ENCODE measurements at regions of chr17 and their contacts with region 1.

Region 1: DNA sequence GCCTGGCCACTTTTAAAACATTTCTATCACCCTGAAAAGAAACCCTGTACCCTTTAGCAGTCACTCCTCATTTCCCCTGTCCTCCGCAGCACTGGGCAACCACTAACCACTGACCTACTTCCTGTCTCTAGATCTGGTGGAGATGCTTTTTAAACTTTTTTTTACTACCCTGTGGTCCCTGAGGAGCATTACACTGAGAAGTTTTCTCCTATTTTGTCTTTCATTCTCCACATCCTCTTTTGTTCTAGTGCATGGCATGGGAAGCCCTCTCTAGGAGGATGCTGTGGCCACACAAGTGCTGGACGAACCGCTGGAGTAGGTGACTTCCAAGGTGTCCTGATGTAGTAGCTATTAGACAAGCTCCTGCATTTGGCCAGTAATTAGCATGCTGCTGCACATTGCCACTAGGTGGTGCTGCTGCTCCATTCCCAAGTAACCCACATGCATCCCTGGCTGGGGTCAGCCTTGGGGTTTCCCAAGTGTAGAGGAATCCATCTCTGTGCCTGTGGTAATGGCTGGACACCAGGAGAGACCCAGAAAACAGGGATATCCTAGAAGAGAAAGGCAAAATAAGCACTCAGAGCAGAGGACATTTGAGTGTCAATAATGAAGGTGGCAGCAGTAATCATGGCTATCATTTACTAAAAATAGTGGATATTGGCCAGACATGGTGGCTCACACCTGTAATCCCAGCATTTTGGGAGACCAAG is 143.8 kb upstream of the CRHR1 start:
- DNase-seq: peak; percentile 41 to 96 (median 81)

Region 2: DNA sequence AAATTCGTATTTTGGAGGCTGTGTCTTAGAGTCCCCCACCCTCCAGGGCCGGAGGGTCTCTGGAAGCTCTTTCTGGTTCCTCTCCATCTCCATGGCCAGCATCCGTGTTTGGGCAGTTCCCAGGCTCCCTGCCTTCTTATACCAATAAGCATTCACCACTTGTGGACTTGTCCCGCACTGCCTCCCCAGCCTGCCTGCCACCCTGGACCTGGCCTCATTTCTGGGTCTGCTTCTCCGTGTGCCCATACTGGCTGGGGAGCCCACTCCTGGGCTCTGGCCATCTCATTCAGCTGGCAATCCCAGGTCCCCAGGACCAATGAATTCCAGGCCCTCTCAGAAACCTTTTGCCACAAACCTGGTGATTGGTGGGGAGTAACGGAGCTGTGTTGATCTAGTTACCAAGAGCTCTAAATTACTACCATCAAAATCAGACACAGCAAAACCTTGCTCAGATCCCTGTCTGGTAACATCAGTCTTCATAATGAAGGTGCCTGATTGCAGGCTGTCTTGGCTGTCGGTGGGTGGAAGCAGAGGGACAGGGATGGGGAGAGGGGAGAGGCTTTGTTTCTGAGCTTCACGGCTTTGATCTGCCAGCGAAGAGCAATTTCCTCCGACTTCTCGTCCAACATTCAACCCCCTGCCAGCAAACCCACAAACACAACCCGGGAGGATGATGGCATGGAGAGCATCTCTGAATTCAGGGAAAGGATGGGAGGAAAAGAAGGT is 116.1 kb after region 1 on chr17:
- intact Hi-C with region 1: no loop called
- DNase-seq: peak in 2 of 10 donors; percentile 49 to 79

Region 3: DNA sequence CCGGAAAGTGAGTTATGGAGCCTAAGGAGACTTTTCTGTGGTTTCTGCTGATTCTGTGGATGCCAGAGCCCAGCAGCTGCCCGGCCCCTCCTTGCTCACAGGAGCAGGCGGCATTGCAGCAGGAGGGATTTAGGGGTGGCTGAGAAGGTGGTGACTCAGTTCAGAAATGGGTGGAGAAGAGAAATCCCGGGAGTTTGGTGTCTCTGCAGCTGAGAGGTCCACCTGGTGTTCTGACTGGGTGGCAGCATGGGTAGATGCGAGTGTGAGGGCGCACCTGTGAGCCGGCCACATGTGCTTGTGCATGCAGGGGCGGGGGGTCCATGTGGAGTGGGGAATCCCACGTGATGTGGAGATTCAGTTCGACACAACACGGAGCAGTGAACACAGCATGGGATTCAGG is 188.3 kb after region 1 on chr17:
- intact Hi-C with region 1: loop called (anchors 1 kb)
- DNase-seq: peak in 4 of 10 donors; percentile 11 to 81 (median 34)

Region 4: DNA sequence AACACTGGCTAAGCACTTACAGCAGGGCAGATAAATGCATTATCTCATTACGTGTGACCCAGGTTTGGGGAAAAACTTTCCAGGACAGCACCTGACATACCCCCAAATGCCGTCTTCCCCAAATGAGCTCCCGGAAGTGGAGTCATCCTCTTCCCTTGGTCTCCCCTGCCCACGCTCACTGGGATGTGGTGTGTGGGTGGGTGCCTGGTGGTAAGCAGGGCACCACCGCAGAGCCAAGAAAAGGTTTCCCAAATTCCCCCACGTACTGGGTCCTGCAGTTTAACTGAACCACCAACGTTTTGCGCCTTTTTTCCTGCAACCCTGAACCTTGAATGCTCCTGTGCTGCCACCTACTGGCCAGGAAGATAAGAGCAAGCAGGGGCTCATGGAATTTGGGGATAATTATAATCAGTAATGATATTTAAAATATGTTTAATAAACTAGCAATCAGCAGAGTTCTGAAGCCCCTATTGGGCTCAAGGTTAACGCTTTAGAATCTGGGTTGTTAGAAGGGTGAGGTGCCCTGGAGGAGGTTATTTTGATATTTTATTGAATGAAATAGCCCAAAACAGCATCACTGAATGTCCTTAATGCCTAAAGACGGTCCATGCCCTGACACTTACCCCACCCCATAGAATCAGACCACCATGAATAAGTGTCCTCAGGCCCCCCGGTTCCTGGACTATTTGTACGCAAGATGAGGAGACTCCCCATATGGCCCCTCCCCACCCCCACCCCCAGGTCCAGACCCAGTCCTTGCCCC is 212.4 kb after region 1 on chr17:
- intact Hi-C with region 1: loop called (anchors 5 kb)
- DNase-seq: peak in 8 of 10 donors; percentile 61 to 93 (median 81)